ENCODE measurements at regions of chr2 and their contacts with region 1.

Region 1: DNA sequence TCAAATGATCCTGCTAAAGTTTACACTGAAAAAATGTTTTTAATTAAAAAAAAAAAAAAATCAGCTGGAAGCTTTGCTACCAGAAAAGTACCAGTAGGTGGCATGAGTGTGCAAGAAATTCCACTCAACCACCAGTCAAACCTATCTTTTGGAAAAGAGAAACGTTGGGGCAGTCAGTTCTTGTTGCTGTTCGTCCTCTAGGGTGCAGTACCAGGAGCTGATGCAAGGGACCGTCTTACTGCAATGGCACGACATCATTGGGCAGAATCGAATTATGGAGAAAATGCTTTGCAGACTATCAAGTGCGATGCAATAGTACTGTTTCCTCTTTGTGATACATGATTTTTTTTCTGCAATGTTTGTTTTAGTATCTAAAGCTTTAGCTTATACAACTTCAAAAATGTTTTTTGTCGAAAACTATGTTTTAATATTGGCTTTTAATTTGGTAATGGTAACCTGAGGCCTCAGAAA is 18.3 kb downstream of the YPEL5 start:
- DNase-seq: peak; percentile 77 to 85 (median 83)
- H3K4me3 ChIP-seq: no peak overlapping the region
- H3K4me3 Mint-ChIP-seq: peak overlapping the region in 1 of 8 donors; percentile 17
- H3K27ac ChIP-seq: no peak overlapping the region
- H3K27ac Mint-ChIP-seq: peak overlapping the region in 2 of 7 donors; percentile 47 to 88
- H3K4me1 ChIP-seq: peaks cover 4% of the 10 kb centered on the region
- H3K4me1 Mint-ChIP-seq: peaks cover 0 to 10% (median 3%) of the 10 kb centered on the region in 4 donors
- H3K27me3 ChIP-seq: no peaks in the 10 kb centered on the region
- H3K27me3 Mint-ChIP-seq: no peaks in the 10 kb centered on the region

Region 2: DNA sequence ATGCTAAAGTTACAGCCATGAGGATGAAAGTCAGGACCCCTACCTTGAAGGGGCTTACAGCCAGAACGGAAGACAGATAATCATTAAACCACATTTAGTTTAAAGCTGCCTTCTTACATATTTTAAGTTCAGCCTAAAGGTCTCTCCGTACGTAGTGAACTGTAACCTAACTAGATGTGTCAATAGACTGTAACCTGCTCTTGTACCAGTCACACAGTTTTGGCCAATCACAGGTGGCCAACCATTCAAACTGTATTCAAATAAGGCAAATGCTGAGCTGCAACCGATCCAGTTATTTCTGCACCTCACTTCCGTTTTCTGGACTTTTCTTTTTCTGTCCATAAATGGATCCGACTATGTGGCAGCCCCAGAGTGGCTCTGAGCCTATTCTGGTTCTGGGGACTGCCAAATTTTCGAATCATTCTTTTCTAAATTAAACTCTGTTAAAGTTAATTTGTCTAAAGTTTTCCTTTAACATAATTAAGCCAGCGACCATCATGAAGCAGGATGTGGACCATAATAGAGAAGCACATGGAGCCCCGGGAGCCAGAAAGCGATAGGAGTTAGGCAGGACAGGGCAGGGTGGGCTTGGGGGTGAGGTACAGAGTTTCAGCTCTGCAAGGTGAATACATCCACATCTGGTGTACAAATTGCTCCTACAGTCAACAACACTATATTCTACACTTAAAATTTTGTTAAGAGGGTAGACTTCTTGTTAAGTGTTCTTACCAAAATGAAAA is 66.6 kb before region 1 on chr2:
- CTCF ChIA-PET with region 1: no interaction called
- POLR2A ChIA-PET with region 1: no interaction called
- intact Hi-C with region 1: no loop called
- DNase-seq: no peak
- H3K4me3 ChIP-seq: no peak overlapping the region
- H3K4me3 Mint-ChIP-seq: no peak overlapping the region
- H3K27ac ChIP-seq: no peak overlapping the region
- H3K27ac Mint-ChIP-seq: no peak overlapping the region
- H3K4me1 ChIP-seq: no peaks in the 10 kb centered on the region
- H3K4me1 Mint-ChIP-seq: no peaks in the 10 kb centered on the region
- H3K27me3 ChIP-seq: peaks cover 2% of the 10 kb centered on the region
- H3K27me3 Mint-ChIP-seq: peaks cover 23 to 31% of the 10 kb centered on the region in 2 donors

Region 3: GRCh38 chr2:30146438-30147147 is 18.5 kb before region 1 on chr2 and contains the start of gene YPEL5:
- CTCF ChIA-PET with region 1: interaction called, 107 read pairs
- POLR2A ChIA-PET with region 1: interaction called, 36 read pairs
- intact Hi-C with region 1: no loop called
- DNase-seq: peak; percentile 99 to 100 (median 100)
- H3K4me3 ChIP-seq: peak within 1 kb of the TSS; percentile 49 to 78
- H3K4me3 Mint-ChIP-seq: peak within 1 kb of the TSS; percentile 86 to 94 (median 88)
- H3K27ac ChIP-seq: peak within 1 kb of the TSS; percentile 99
- H3K27ac Mint-ChIP-seq: peak within 1 kb of the TSS; percentile 98 to 100 (median 100)
- H3K4me1 ChIP-seq: peaks cover 54% of the 10 kb centered on the region
- H3K4me1 Mint-ChIP-seq: peaks cover 36 to 73% (median 43%) of the 10 kb centered on the region in 4 donors
- H3K27me3 ChIP-seq: no peaks in the 10 kb centered on the region
- H3K27me3 Mint-ChIP-seq: no peaks in the 10 kb centered on the region
- total RNA-seq, gene YPEL5: 81.5 to 88.4 TPM

Region 4: DNA sequence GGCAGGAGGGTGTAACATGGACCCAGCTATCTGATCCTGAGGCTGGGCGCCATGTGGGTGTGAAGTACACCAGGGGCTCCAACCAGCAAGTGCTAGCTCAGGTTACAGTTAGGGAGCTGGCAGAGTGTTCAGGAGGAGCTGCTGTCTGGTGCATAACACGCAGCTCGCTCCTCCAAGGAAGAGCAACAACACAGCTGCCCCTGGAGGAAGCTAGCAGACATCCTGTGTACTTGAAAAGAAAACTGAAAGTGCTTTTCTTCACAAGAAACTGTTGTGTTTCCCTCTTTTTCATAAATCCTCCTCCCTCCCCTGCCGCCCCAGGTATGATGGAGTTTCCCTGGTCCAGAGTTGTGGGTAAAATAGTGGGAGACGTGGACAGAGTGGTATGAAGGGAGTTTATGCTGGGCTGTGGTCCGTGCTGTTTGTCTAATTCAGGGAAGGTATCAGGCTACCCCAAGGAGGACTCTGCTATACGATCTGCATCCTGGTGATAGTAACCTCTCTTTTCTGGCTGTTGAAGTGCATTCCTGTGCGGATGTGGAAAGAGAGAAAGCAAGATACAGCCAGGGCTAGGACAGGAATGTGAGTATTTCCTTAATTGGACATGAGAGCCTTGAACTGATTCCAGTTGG is 60.2 kb after region 1 on chr2:
- CTCF ChIA-PET with region 1: interaction called, 10 read pairs
- POLR2A ChIA-PET with region 1: interaction called, 15 read pairs
- intact Hi-C with region 1: no loop called
- DNase-seq: peak; percentile 63 to 75 (median 67)
- H3K4me3 ChIP-seq: peak overlapping the region; percentile 54 to 79
- H3K4me3 Mint-ChIP-seq: peak overlapping the region; percentile 88 to 99 (median 94)
- H3K27ac ChIP-seq: peak overlapping the region; percentile 95
- H3K27ac Mint-ChIP-seq: peak overlapping the region; percentile 96 to 100 (median 99)
- H3K4me1 ChIP-seq: peaks cover 75% of the 10 kb centered on the region
- H3K4me1 Mint-ChIP-seq: peaks cover 55 to 84% (median 70%) of the 10 kb centered on the region in 4 donors
- H3K27me3 ChIP-seq: no peaks in the 10 kb centered on the region
- H3K27me3 Mint-ChIP-seq: no peaks in the 10 kb centered on the region

Region 5: DNA sequence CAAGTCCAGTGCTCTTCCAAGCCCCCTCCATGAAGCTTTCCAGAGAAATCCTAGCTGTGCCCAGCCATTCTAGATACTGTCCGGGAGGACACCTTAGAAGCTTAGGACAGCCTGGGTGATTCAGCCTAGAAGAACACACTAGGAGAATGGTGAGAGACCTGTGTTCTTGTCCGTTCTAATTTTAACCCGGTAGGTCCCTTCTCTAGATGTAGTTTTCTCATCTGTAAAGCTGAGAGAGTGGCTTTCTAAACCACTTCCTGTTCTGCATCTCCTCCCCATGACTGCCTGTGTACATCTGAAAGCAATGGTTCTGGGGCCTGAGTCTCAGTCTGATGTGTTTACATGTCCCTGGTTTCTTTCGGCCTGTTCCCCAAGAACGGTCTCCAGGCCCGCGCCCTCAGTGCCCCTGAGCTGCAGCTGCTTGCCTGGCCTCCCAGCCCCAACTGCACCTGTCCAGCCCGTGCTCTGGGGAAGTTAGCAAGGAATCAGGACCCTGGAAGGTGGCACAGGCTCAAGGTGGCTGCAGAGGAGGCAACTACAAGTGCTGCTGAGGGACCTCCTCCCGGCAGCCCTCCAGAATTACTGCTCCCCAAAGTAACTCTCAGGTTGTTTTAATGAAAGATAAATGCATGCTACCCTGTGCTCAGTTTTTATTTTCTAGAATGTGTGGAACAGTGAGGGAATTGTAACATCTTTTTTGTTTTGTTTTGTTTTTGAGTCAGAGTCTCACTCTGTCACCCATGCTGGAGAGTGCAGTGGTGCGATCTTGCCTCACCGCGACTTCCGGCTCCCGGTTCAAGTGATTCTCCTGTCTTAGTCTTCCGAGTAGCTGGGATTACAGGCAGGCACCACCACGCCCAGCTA is 172.1 kb after region 1 on chr2:
- CTCF ChIA-PET with region 1: interaction called, 24 read pairs
- POLR2A ChIA-PET with region 1: interaction called, 5 read pairs
- intact Hi-C with region 1: loop called (anchors 2 kb)
- DNase-seq: peak; percentile 58 to 66 (median 64)
- H3K4me3 ChIP-seq: peak overlapping the region; percentile 10 to 61
- H3K4me3 Mint-ChIP-seq: peak overlapping the region; percentile 76 to 89 (median 82)
- H3K27ac ChIP-seq: peak overlapping the region; percentile 58
- H3K27ac Mint-ChIP-seq: peak overlapping the region; percentile 94 to 97 (median 96)
- H3K4me1 ChIP-seq: peaks cover 72% of the 10 kb centered on the region
- H3K4me1 Mint-ChIP-seq: peaks cover 63 to 74% (median 70%) of the 10 kb centered on the region in 4 donors
- H3K27me3 ChIP-seq: no peaks in the 10 kb centered on the region
- H3K27me3 Mint-ChIP-seq: no peaks in the 10 kb centered on the region

Region 6: GRCh38 chr2:31333527-31334183 is 1168.6 kb after region 1 on chr2:
- CTCF ChIA-PET with region 1: interaction called, 13 read pairs
- POLR2A ChIA-PET with region 1: no interaction called
- intact Hi-C with region 1: loop called (anchors 1 kb)
- DNase-seq: peak; percentile 71 to 76 (median 75)
- H3K4me3 ChIP-seq: no peak overlapping the region
- H3K4me3 Mint-ChIP-seq: no peak overlapping the region
- H3K27ac ChIP-seq: no peak overlapping the region
- H3K27ac Mint-ChIP-seq: peak overlapping the region in 2 of 7 donors; percentile 20 to 48
- H3K4me1 ChIP-seq: no peaks in the 10 kb centered on the region
- H3K4me1 Mint-ChIP-seq: no peaks in the 10 kb centered on the region
- H3K27me3 ChIP-seq: no peaks in the 10 kb centered on the region
- H3K27me3 Mint-ChIP-seq: peaks cover 1 to 3% of the 10 kb centered on the region in 2 donors